GM10248 (cell line): ENCODE measurements at regions of chr19 and their contacts with region 1.

Region 1: DNA sequence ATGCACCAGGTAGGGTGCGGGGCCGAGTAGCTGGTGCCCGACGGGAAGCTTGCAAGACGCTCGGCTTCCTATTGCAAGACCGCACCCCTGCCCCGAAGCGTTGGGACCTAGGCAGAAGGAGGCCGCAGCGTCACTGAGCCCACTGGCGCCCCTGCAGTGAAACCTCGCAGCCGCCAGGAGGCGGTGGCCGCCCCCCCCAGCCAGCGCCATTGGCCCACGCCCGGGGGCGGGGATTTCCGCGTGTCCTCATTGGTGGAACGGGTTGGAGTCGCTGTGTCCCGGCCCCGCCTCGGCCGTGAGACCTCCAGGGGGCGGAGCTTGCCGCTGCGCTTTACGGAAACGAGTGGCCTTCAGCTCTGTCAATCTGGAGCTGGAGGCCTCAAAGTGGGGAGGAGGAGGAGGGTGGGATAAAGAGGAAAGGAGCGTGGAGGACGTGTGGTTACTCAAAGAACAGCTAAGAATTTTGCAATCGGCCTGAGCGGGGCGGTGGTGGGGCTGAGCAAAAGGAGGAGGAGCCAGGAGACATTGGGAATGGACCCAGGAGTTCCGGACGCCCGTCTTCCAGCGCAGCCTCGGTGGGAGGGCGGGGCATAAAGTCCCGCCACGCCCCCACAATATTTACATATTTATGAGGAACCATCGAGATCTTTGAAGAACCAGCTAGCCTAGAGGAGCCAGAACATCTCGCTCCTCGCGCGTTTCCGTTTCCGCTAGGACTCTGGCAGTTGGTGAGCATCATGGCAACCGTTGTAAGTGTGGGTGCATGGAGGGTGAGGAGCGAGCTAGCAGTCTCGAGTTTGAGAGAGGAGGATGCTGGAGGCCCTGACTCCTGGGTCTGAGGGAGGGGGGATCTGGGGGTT is at the starts of genes GYS1 and RUVBL2:
- DNase-seq: peak; percentile 99
- CTCF ChIP-seq: peak; percentile 91

Region 2: GRCh38 chr19:48746738-48747575 is 246.4 kb before region 1 on chr19 and contains the start of gene IZUMO1:
- CTCF ChIA-PET with region 1: no interaction called
- POLR2A ChIA-PET with region 1: no interaction called
- DNase-seq: peak; percentile 74
- CTCF ChIP-seq: no peak

Region 3: DNA sequence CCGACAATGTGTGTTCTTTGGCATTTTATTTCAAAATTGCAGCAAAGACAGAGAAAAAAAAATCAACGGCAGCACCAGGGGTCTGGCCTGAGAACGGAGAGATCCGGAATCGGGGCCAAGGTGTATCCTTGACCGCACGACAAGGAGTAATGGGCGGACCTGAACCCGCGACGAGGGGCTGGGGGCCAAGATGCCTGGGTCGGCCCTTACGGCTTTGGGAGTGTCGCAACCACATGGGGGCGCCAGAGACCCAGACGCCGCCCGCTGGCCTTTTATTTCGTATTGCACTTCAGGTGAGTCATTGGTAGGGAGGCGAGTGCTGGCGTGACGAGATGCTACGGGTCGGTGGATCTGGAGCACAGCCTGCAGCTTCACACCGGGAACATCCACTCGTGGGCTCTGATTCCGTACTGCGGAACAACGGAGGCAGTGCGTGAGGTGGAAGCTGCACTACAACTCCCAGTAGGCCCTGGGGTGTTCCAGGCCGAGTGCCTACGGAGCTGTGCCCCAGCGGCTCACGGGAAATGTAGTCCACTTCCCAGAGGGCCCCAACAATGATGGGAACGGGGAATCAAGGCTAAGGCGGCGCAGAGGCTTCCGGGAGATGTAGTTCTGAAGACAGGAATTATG is 198.2 kb before region 1 on chr19:
- CTCF ChIA-PET with region 1: interaction called, 17 read pairs
- POLR2A ChIA-PET with region 1: no interaction called
- DNase-seq: peak; percentile 92
- CTCF ChIP-seq: peak; percentile 85

Region 4: GRCh38 chr19:48965040-48965805 is 28.2 kb before region 1 on chr19 and contains the start of gene FTL:
- CTCF ChIA-PET with region 1: interaction called, 53 read pairs
- POLR2A ChIA-PET with region 1: interaction called, 29 read pairs
- DNase-seq: peak; percentile 97
- CTCF ChIP-seq: no peak

Region 5: GRCh38 chr19:48975947-48976847 is 17.2 kb before region 1 on chr19:
- CTCF ChIA-PET with region 1: interaction called, 129 read pairs
- POLR2A ChIA-PET with region 1: interaction called, 9 read pairs
- DNase-seq: no peak
- CTCF ChIP-seq: no peak

Region 6: DNA sequence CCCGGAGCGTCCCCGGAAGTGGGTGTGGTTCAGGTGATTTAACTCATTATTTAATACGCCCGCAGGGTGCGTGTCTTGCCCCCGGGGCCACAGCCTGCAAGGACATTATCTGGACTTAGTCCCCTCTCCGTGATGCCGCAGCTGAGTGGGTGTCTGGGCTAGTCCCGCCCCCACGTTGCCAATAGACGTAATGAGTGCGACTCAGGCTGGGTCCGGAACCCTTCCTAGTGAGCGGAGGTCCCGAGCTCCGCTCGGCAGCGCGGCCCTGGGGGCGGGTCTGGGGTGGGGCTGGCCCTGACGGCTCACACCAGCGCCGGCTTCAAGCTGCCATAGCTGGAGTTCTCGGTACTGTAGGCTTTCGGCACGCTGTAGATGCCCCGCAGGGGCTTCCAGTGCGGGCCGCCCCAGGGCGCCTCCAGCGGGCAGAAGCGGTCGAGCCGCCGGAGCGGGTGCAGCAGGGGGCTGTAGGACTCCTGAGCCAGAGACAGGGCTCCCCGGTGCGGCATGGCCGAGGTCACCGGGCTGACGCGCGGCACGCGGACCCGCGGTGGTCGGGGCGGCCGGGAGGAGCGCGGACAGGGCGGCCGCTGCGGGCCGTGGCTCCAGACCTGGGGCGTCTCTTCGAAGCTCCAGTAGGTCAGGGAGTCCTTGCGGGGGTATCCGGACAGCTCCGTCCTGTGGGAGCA is 24.4 kb after region 1 on chr19:
- CTCF ChIA-PET with region 1: interaction called, 36 read pairs
- POLR2A ChIA-PET with region 1: interaction called, 3 read pairs
- DNase-seq: peak; percentile 79
- CTCF ChIP-seq: peak; percentile 53